ENCODE measurements at regions of chr9 and their contacts with region 1.

Region 1: GRCh38 chr9:69027355-69028096 is 8.0 kb upstream of the FXN start:
- DNase-seq: peak; percentile 45
- ATAC-seq: peak; percentile 88
- H3K4me3 ChIP-seq: no peak overlapping the region
- H3K27ac ChIP-seq: no peak overlapping the region
- H3K4me1 ChIP-seq: no peaks in the 10 kb centered on the region
- H3K27me3 ChIP-seq: peaks cover 11% of the 10 kb centered on the region
- CTCF ChIP-seq: peak; percentile 67
- POLR2A ChIP-seq: no peak
- RAD21 ChIP-seq: peak; percentile 53

Region 2: DNA sequence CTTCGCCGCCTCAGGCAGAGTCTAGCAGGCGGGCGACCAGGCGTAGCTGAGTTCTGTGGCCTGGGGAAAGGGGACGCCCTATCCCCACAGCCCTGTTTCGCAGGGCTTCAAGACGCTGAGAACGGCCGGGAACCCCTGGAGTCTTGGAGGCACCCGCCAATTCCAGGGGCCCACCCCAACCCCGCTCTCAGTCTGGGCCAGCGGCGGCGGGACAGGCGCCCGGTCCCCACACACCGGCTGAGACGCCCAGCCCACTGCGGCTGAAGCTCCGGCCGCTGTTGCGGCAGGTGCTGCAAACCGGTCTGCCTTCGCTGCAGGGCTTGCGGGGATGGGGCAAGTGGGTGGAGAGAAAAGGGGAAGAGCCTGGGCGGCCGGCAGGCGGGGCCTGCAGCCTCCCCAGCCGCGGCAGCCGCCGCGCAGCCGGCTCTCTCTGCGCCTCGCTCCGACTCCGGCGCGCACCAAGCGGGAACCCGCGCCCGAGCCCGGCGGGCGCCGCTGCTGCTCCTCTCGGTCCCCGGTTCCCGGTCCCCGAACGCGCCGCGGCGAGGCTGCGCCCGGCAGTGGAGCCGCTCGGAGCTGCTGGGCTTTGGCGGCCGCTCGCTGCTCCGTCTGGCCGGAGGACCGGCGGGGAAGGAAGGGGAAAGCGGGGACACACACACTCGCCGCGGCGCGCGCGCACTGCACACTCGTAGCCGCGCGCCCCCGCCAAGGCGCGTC is 322.6 kb before region 1 on chr9 and contains the start of gene PIP5K1B:
- CTCF ChIA-PET with region 1: no interaction called
- POLR2A ChIA-PET with region 1: no interaction called
- dilution Hi-C with region 1: no loop called
- in situ Hi-C with region 1: no loop called
- intact Hi-C with region 1: loop called (anchors 10 kb)
- DNase-seq: peak; percentile 29
- ATAC-seq: peak; percentile 97
- H3K4me3 ChIP-seq: peak within 1 kb of the TSS; percentile 44
- H3K27ac ChIP-seq: no peak within 1 kb of the TSS
- H3K4me1 ChIP-seq: no peaks in the 10 kb centered on the region
- H3K27me3 ChIP-seq: peaks cover 29% of the 10 kb centered on the region
- CTCF ChIP-seq: no peak
- POLR2A ChIP-seq: no peak
- RAD21 ChIP-seq: no peak
- total RNA-seq, gene PIP5K1B: not detected in 2 replicates

Region 3: GRCh38 chr9:68895741-68896478 is 131.6 kb before region 1 on chr9:
- CTCF ChIA-PET with region 1: no interaction called
- POLR2A ChIA-PET with region 1: no interaction called
- dilution Hi-C with region 1: no loop called
- in situ Hi-C with region 1: no loop called
- intact Hi-C with region 1: no loop called
- DNase-seq: no peak
- ATAC-seq: no peak
- H3K4me3 ChIP-seq: no peak overlapping the region
- H3K27ac ChIP-seq: no peak overlapping the region
- H3K4me1 ChIP-seq: no peaks in the 10 kb centered on the region
- H3K27me3 ChIP-seq: no peaks in the 10 kb centered on the region; the same call in none of the 2 replicates
- CTCF ChIP-seq: no peak
- POLR2A ChIP-seq: no peak
- RAD21 ChIP-seq: no peak

Measured in IMR-90 (cell line).